Activated CD4-positive, alpha-beta T cell treated with anti-CD3 and anti-CD28 coated beads, Interleukin-2, amount 10 ng/mL, durations not matched to agents 24 days and 14 days (primary cell): ENCODE measurements at regions of chr4 and their contacts with region 1.

Region 1: DNA sequence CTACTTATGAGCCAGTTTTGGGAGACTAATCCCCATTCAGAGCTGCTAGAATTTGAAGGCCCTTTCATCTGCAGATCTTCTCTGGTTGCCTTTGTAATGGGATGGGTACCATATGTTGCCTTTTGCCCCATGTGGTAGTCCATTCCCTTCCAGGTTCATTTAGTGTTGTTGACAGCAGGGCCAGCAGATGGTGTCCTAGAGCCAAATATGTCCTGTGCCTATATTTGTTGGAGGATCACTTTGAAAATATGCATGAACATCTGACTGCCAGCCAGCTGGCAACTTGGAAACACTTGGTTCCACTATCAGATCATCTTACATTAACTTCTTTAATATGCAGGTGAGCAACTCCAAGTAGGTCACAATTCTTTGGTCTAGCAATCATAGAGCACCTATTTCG is 30.4 kb downstream of the CFAP299 start:
- DNase-seq: peak; percentile 80
- H3K4me3 Mint-ChIP-seq: no peak overlapping the region
- H3K27ac Mint-ChIP-seq: no peak overlapping the region
- H3K4me1 Mint-ChIP-seq: no peaks in the 10 kb centered on the region
- H3K27me3 Mint-ChIP-seq: peaks cover 3% of the 10 kb centered on the region

Region 2: DNA sequence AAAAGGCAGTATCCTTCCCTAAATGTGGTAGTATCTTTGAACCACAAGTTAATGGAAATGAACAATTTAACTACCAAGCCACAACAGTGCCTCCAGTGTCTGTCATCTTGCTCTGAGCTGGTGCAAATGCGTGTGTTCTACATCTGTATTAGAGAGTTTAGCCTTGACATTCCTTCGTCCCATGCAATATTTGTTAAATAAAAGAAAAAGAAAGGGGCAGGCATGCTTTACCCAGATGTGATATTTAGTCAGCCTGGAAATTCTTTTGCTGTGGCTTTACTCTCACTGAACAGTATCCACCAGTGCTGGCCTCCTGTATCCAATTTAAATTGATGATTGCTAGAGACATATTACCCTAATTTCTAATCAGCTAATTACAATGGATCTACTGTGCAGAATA is 280.1 kb after region 1 on chr4:
- intact Hi-C with region 1: no loop called
- DNase-seq: no peak
- H3K4me3 Mint-ChIP-seq: no peak overlapping the region
- H3K27ac Mint-ChIP-seq: no peak overlapping the region
- H3K4me1 Mint-ChIP-seq: no peaks in the 10 kb centered on the region
- H3K27me3 Mint-ChIP-seq: no peaks in the 10 kb centered on the region

Region 3: DNA sequence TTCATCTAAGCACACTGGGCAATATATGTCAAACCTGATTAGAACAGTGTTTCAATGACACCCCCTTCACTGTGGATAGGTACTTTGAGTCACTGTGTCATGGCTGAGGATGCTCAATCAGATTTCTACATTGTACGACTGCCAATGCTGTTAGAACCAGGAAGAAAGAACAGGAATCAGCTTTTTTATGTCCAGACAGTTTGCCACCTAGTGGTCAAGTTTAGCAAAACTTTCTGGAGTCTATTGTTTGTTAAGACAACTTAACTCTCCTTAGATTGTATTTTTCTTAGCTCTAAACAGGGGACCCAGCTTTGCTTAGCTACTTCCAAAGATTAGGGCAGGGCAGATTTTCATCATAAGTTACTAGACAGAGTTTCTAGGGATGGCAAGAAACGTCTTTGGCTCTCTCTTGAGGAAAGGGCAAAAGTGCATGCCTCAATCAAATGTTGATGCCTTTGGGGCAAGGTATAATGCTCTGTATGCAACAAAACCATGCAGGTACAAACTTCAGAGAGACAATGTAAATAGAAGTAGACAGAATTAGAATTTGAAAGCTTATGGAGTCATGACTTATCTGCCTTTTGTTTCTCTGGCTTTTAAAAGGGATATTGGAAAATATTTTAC is 624.1 kb after region 1 on chr4:
- intact Hi-C with region 1: loop called (anchors 1 kb)
- DNase-seq: peak; percentile 72
- H3K4me3 Mint-ChIP-seq: no peak overlapping the region
- H3K27ac Mint-ChIP-seq: no peak overlapping the region
- H3K4me1 Mint-ChIP-seq: no peaks in the 10 kb centered on the region
- H3K27me3 Mint-ChIP-seq: peaks cover 4% of the 10 kb centered on the region

Region 4: GRCh38 chr4:81040012-81040659 is 674.2 kb after region 1 on chr4:
- intact Hi-C with region 1: loop called (anchors 2 kb)
- DNase-seq: peak; percentile 58
- H3K4me3 Mint-ChIP-seq: no peak overlapping the region
- H3K27ac Mint-ChIP-seq: no peak overlapping the region
- H3K4me1 Mint-ChIP-seq: no peaks in the 10 kb centered on the region
- H3K27me3 Mint-ChIP-seq: peaks cover 22% of the 10 kb centered on the region

Region 5: GRCh38 chr4:81052119-81053068 is 686.5 kb after region 1 on chr4:
- intact Hi-C with region 1: loop called (anchors 5 kb)
- DNase-seq: peak; percentile 64
- H3K4me3 Mint-ChIP-seq: no peak overlapping the region
- H3K27ac Mint-ChIP-seq: no peak overlapping the region
- H3K4me1 Mint-ChIP-seq: no peaks in the 10 kb centered on the region
- H3K27me3 Mint-ChIP-seq: peaks cover 16% of the 10 kb centered on the region

Region 6: GRCh38 chr4:81351654-81352445 is 985.9 kb after region 1 on chr4:
- intact Hi-C with region 1: loop called (anchors 5 kb)
- DNase-seq: peak; percentile 86
- H3K4me3 Mint-ChIP-seq: no peak overlapping the region
- H3K27ac Mint-ChIP-seq: no peak overlapping the region
- H3K4me1 Mint-ChIP-seq: no peaks in the 10 kb centered on the region
- H3K27me3 Mint-ChIP-seq: peaks cover 5% of the 10 kb centered on the region